Cardiac septum (tissue), 1 donor: ENCODE measurements at regions of chr7 and their contacts with region 1.

Region 1: GRCh38 chr7:24979863-24980533 is at the start of gene OSBPL3:
- DNase-seq: peak; percentile 97
- total RNA-seq, gene OSBPL3: 2.4 TPM

Region 2: GRCh38 chr7:24819916-24820689 is 159.9 kb before region 1 on chr7:
- intact Hi-C with region 1: loop called (anchors 2 kb)
- DNase-seq: no peak

Region 3: DNA sequence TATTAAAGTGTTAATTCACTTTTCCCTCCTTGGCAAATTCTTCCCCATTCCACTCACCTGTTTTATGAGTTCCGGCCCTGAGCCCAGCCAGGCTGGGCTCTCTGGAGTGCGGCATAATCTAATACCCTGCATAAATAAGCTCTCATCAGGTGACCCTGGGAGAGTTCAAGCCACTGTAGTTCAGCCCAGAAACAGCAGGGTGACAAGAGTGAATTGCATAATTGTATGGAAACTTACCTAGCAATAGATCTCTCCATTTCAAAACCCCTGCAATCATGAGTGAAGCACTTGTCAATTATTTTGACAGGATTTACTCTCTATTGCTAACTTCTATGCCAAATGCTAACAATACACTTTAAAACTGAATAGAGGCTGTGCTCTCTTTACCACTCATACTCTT is 94.7 kb before region 1 on chr7:
- intact Hi-C with region 1: no loop called
- DNase-seq: no peak

Region 4: GRCh38 chr7:24991353-24991752 is 11.4 kb after region 1 on chr7:
- intact Hi-C with region 1: no loop called
- DNase-seq: no peak

Region 5: GRCh38 chr7:25028370-25029021 is 48.5 kb after region 1 on chr7:
- intact Hi-C with region 1: loop called (anchors 5 kb)
- DNase-seq: no peak

Region 6: DNA sequence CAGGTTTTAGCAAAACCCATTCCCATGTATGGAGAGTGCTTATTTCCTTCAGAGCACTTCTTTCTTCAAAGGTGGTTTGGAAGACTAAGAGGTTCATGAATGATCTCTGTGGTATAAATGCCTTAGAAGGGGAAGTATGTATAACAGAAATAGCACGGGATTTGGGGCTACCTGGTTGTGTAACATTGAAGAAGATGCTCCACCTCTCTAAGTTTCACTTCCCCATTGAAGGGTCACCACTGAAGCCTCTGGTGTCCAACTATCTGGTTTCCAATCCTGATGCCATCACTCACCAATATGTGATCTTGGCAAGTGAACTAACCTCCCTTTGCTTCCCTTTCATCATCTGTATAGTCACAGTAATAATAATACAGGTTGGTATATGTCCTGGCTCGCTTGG is 107.9 kb after region 1 on chr7:
- intact Hi-C with region 1: no loop called
- DNase-seq: no peak

Region 7: DNA sequence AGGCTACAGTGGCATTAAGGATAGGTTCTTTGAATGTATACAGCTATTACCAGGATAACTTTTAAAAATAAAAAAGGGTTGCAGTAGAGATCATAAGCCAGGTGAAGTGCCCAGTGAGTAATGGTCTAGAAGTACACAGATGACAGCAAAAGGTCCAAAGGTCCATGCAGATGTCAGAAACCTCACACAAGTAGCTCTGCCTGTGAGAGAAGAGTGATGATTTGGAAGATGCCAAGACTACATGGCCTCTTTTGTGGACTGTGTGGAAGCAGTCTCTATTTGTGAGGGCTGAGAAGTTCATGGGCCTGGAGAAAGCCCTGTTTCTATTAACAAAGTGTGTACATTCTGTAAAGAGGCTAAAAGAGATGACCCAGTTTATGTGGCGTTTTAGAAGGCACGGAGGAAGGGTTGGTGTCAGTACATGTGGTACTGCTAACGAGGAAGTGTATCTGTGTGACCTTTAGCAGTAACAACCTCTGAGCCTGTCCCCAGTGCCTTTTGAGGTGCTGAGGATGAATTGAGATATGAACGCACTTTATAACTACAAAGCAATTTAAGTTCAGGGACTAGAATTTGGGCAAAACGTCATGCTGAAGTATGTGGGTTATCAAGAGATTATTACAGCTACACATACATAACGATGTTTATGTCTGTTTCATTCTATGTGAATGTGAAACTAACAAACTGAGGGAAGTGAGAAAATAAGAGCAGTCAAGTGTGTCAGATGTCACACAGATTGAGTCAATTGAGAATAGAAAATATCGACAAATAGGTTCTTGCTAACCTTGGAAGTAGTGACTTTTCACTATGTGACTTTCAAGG is 137.4 kb after region 1 on chr7:
- intact Hi-C with region 1: no loop called
- DNase-seq: no peak